Natural killer cell (primary cell): ENCODE measurements at regions of chr11 and their contacts with region 1.

Region 1: GRCh38 chr11:3164979-3165814 is at the start of gene OSBPL5:
- DNase-seq: peak; percentile 65 to 70
- ATAC-seq: peak; percentile 75 to 77 (median 77)
- H3K4me3 ChIP-seq: peak within 1 kb of the TSS; percentile 91
- H3K4me3 Mint-ChIP-seq: peak within 1 kb of the TSS; percentile 93
- H3K27ac ChIP-seq: peak within 1 kb of the TSS; percentile 58
- H3K27ac Mint-ChIP-seq: peak within 1 kb of the TSS; percentile 82 to 93
- H3K4me1 ChIP-seq: peaks cover 71% of the 10 kb centered on the region
- H3K4me1 Mint-ChIP-seq: peaks cover 46 to 60% of the 10 kb centered on the region in 2 donors
- H3K27me3 ChIP-seq: peaks cover 6% of the 10 kb centered on the region
- H3K27me3 Mint-ChIP-seq: peaks cover 0 to 10% of the 10 kb centered on the region in 2 donors
- CTCF ChIP-seq: no peak
- total RNA-seq, gene OSBPL5: 375 to 522 (median 377) TPM

Region 2: GRCh38 chr11:3014057-3014938 is 150.9 kb before region 1 on chr11:
- intact Hi-C with region 1: no loop called
- DNase-seq: peak; percentile 44 to 92
- ATAC-seq: peak; percentile 81 to 87 (median 86)
- H3K4me3 ChIP-seq: no peak overlapping the region
- H3K4me3 Mint-ChIP-seq: peak overlapping the region; percentile 63
- H3K27ac ChIP-seq: peak overlapping the region; percentile 53
- H3K27ac Mint-ChIP-seq: peak overlapping the region; percentile 63 to 80
- H3K4me1 ChIP-seq: peaks cover 39% of the 10 kb centered on the region
- H3K4me1 Mint-ChIP-seq: peaks cover 0 to 15% of the 10 kb centered on the region in 2 donors
- H3K27me3 ChIP-seq: no peaks in the 10 kb centered on the region
- H3K27me3 Mint-ChIP-seq: no peaks in the 10 kb centered on the region
- CTCF ChIP-seq: no peak

Region 3: DNA sequence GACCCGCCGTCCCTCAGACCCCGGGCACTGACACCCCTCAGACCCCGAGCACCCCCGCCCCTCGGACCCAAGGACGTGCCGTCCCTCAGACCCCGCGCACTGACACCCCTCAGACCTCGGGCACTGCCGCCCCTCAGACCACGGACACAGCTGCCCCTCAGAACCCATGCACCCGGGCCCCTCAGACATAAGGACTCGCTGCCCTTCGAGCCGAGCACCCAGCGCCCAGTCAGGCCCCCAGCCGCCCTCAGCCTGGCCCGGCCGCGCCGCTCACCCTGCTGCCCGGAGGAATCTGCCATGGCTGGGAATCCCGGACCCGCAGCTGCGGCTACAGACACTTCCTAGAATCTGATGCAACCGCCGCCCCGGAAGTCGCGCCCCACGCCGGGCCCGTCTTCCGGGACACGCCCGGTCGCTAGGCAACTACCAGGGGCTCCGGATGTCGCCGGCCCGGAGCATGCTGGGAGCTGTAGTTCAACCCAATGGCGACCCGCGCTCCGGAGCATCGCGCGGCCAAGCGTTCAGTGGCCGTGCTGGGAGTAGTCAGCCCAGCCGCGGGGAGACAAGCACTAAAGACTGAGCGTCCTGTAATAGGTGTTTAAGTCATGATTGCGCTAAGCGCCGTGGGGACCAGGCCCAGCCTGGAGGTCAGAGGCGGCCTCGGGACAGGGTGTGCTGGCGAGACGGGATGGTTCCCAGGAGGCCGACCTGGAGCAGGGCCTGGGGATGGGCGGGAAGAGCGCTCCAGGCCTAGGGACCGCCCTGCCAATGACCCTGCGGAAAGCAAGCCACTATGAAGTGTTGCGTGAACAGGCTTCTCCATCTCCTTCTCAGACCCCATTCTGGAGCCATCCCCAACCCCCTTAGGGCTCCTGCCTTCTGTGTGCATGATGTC is 107.9 kb before region 1 on chr11 and contains the start of gene CARS1:
- intact Hi-C with region 1: no loop called
- DNase-seq: peak; percentile 88 to 96
- ATAC-seq: peak; percentile 97 to 99 (median 98)
- H3K4me3 ChIP-seq: peak within 1 kb of the TSS; percentile 83
- H3K4me3 Mint-ChIP-seq: peak within 1 kb of the TSS; percentile 91
- H3K27ac ChIP-seq: peak within 1 kb of the TSS; percentile 37
- H3K27ac Mint-ChIP-seq: peak within 1 kb of the TSS; percentile 80 to 93
- H3K4me1 ChIP-seq: peaks cover 20% of the 10 kb centered on the region
- H3K4me1 Mint-ChIP-seq: peaks cover 36% of the 10 kb centered on the region in 2 donors
- H3K27me3 ChIP-seq: no peaks in the 10 kb centered on the region
- H3K27me3 Mint-ChIP-seq: no peaks in the 10 kb centered on the region
- CTCF ChIP-seq: no peak
- total RNA-seq, gene CARS1: 47.9 to 51.3 (median 50.3) TPM

Region 4: DNA sequence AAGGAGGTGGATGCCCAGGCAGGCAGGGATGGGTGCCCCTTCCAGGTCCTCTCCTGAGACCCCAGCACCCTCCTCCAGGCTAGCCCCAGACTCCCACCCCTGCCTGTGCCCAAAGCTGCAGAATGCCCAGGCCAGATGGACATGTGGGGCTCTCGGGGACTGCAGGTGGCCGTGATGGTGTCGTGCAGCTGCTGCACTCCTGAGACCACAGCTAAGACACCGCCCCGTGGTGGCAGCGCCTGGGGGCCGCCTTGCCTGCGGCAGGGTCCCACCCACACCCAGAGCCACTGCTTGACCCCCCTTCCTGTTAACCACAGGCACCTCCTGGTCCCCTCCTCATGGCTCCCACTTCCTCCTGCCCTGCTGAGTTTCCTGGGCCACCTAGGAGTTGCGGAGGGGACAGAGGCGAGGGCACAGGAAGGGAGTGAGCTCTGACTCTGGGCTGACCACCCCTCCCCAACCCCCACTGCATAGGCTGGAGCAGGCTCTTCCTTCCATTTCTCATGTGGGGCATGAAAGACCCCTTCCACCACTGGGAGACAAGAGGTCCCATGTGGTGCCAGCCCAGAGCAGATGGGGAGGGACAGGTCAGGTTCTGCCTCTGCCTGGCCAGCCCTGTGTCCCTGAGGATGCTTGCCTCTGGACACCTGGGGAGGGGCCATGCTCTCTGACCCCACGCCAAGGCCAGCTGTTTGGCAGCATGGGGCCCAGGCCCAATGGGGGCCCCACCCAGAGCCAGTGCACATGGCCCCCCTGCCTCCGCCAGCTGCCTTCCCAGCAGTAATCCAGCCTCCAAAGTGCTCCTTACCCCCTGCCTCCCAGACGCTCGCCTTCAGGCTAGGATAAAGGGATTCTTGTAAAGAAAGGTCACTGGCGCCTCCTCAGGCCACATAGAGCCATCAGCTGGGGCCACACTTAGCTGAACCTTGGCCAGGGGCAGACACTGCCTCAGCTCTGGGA is 29.4 kb before region 1 on chr11:
- intact Hi-C with region 1: loop called (anchors 2 kb)
- DNase-seq: peak in 1 of 2 donors; percentile 49
- ATAC-seq: peak; percentile 34 to 51 (median 42)
- H3K4me3 ChIP-seq: peak overlapping the region; percentile 14
- H3K4me3 Mint-ChIP-seq: peak overlapping the region; percentile 88
- H3K27ac ChIP-seq: peak overlapping the region; percentile 61
- H3K27ac Mint-ChIP-seq: peak overlapping the region; percentile 90 to 93
- H3K4me1 ChIP-seq: peaks cover 94% of the 10 kb centered on the region
- H3K4me1 Mint-ChIP-seq: peaks cover 72 to 98% of the 10 kb centered on the region in 2 donors
- H3K27me3 ChIP-seq: no peaks in the 10 kb centered on the region
- H3K27me3 Mint-ChIP-seq: no peaks in the 10 kb centered on the region
- CTCF ChIP-seq: no peak

Region 5: DNA sequence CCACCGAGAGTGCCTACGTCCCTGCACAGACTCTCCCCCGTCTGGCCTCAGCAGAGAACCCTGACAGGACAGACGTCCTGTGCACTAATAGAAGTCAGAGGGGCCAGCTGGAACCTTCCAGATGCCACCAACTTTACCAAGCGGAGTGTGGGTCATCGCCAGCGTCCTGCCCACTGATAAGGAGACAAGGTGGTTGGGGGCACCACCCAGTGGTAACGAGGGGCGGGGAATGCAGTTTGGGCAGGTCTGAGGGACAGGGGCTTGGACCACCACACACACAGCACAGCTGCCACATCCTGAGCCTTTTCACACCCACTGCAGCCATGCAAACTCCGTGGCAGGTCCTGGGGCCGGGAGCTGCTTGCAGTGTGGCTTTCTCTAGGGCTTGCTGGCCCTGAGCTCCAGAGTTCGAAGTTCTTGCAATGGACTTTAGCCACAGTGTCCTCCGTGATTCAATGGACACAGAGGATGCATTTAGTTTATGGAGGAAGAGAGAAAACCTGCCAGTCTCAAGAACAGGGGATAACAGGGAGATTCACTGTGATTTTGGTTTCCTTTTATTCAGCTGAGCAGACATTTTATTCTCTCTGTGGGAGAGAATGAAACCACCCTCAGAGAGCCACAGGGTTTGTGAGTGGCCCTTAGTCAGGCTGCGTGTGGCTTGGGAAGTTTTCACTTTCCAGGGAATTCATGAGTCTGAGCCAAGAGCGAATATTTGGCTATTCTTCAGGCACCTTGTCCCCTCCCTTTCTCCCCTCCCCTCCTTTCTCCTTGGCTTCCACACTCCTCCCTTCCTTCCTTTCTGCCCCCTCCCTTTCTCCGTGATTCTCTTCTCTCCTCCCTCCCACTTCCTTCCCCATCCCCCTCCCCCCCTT is 40.3 kb after region 1 on chr11:
- intact Hi-C with region 1: loop called (anchors 5 kb)
- DNase-seq: peak; percentile 28 to 37
- ATAC-seq: peak; percentile 50 to 78 (median 69)
- H3K4me3 ChIP-seq: no peak overlapping the region
- H3K4me3 Mint-ChIP-seq: peak overlapping the region; percentile 75
- H3K27ac ChIP-seq: peak overlapping the region; percentile 15
- H3K27ac Mint-ChIP-seq: no peak overlapping the region
- H3K4me1 ChIP-seq: peaks cover 56% of the 10 kb centered on the region
- H3K4me1 Mint-ChIP-seq: peaks cover 15 to 19% of the 10 kb centered on the region in 2 donors
- H3K27me3 ChIP-seq: peaks cover 28% of the 10 kb centered on the region
- H3K27me3 Mint-ChIP-seq: peaks cover 0 to 14% of the 10 kb centered on the region in 2 donors
- CTCF ChIP-seq: no peak